Naive thymus-derived CD4-positive, alpha-beta T cell (primary cell): ENCODE measurements at regions of chr4 and their contacts with region 1.

Region 1: GRCh38 chr4:168514249-168514852 is 17.5 kb downstream of the PALLD start:
- DNase-seq: peak in 5 of 9 donors; percentile 16 to 36 (median 25)
- ATAC-seq: no peak
- H3K4me3 ChIP-seq: no peak overlapping the region
- H3K4me3 Mint-ChIP-seq: no peak overlapping the region
- H3K27ac ChIP-seq: no peak overlapping the region
- H3K27ac Mint-ChIP-seq: no peak overlapping the region
- H3K4me1 ChIP-seq: peaks cover 16 to 20% of the 10 kb centered on the region in 2 donors
- H3K4me1 Mint-ChIP-seq: peaks cover 5 to 38% (median 35%) of the 10 kb centered on the region in 7 donors
- H3K27me3 ChIP-seq: no peaks in the 10 kb centered on the region
- H3K27me3 Mint-ChIP-seq: peaks cover 0 to 31% (median 0%) of the 10 kb centered on the region in 5 donors

Region 2: DNA sequence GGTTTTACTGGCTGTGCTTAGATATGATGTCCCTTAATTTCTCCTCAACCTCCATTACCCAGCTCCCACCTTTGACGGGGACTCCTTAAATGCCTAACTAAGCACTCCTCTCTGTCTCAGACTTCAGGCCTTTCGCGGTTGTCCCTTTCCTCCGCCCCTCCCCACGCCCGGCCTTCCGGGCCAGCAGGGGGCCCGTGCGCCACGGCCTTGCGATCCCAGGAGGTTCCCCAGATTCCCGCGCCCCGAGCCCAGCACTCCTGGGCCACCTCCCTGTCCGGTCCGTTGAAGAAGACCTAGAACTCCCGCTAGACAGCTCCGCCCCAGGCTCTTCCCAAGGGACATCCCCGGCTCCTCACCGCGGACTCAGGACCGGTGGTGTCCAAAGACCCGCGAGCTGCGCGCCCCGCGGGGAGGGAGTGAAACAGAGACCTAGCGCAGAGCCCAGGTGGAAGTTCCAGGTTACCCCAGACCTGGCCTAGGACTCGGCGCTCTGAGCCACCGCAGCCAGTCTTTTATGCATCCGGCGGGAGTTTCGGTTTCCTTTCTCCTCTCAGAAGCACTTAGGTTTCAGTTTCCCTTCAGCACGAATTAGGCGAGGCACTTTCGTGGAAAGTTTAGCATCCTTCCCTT is 196.0 kb before region 1 on chr4 and contains the start of gene DDX60:
- CTCF ChIA-PET with region 1: interaction called, 3 read pairs
- POLR2A ChIA-PET with region 1: no interaction called
- intact Hi-C with region 1: loop called in 1 of 2 experiments (anchors 2 kb)
- DNase-seq: peak; percentile 54 to 89 (median 85)
- ATAC-seq: peak; percentile 95
- H3K4me3 ChIP-seq: peak within 1 kb of the TSS; percentile 88
- H3K4me3 Mint-ChIP-seq: peak within 1 kb of the TSS; percentile 84 to 99 (median 96)
- H3K27ac ChIP-seq: peak within 1 kb of the TSS; percentile 95
- H3K27ac Mint-ChIP-seq: peak within 1 kb of the TSS; percentile 96 to 99 (median 99)
- H3K4me1 ChIP-seq: peaks cover 12 to 18% of the 10 kb centered on the region in 2 donors
- H3K4me1 Mint-ChIP-seq: peaks cover 28 to 69% (median 59%) of the 10 kb centered on the region in 7 donors
- H3K27me3 ChIP-seq: no peaks in the 10 kb centered on the region
- H3K27me3 Mint-ChIP-seq: no peaks in the 10 kb centered on the region
- total RNA-seq, gene DDX60: 15.8 to 121 (median 29.0) TPM

Region 3: DNA sequence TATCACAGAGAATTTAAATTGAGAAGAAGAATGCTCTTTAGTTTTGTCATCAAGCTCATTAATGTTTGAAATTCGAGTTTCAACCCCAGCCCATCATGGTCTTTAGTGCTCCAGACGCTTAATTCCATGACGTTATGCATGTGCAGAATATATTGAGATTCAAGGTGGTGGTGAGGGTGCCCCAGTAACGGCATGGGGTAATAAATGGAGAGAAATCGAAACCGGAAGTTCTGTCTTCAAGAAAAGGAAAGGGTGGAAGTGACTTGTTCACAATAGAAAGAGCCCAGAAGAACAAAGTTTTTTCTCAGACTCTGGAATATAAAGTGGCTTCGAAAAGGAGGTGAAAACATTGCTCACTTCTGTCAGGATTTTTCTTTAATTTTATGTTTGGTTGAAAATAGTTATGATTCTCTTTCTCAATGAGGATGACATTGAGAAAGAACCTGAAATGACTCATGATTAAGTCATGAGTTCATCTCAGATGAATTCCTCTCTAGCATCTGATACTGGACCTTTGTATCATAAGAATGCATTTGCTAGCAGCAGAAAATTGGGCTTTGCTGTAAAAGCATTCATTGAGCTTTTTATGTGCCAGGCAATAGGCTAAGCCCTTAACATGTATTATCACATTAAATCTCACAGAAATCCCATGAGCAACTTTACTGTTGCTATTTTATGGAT is 33.3 kb before region 1 on chr4:
- CTCF ChIA-PET with region 1: interaction called, 9 read pairs
- POLR2A ChIA-PET with region 1: interaction called, 10 read pairs
- intact Hi-C with region 1: loop called (anchors 1 kb)
- DNase-seq: peak in 8 of 9 donors; percentile 22 to 85 (median 78)
- ATAC-seq: peak; percentile 75
- H3K4me3 ChIP-seq: peak overlapping the region; percentile 72
- H3K4me3 Mint-ChIP-seq: peak overlapping the region; percentile 88 to 100 (median 98)
- H3K27ac ChIP-seq: peak overlapping the region; percentile 95
- H3K27ac Mint-ChIP-seq: peak overlapping the region; percentile 98 to 100 (median 99)
- H3K4me1 ChIP-seq: peaks cover 20 to 33% of the 10 kb centered on the region in 2 donors
- H3K4me1 Mint-ChIP-seq: peaks cover 46 to 82% (median 74%) of the 10 kb centered on the region in 7 donors
- H3K27me3 ChIP-seq: no peaks in the 10 kb centered on the region
- H3K27me3 Mint-ChIP-seq: no peaks in the 10 kb centered on the region

Region 4: GRCh38 chr4:168551945-168552695 is 37.8 kb after region 1 on chr4:
- CTCF ChIA-PET with region 1: no interaction called
- POLR2A ChIA-PET with region 1: no interaction called
- intact Hi-C with region 1: loop called (anchors 1 to 5 kb)
- DNase-seq: peak in 6 of 9 donors; percentile 8 to 38 (median 23)
- ATAC-seq: peak; percentile 57
- H3K4me3 ChIP-seq: no peak overlapping the region
- H3K4me3 Mint-ChIP-seq: no peak overlapping the region
- H3K27ac ChIP-seq: no peak overlapping the region
- H3K27ac Mint-ChIP-seq: no peak overlapping the region
- H3K4me1 ChIP-seq: no peaks in the 10 kb centered on the region
- H3K4me1 Mint-ChIP-seq: no peaks in the 10 kb centered on the region
- H3K27me3 ChIP-seq: no peaks in the 10 kb centered on the region
- H3K27me3 Mint-ChIP-seq: peaks cover 0 to 9% (median 4%) of the 10 kb centered on the region in 5 donors

Region 5: DNA sequence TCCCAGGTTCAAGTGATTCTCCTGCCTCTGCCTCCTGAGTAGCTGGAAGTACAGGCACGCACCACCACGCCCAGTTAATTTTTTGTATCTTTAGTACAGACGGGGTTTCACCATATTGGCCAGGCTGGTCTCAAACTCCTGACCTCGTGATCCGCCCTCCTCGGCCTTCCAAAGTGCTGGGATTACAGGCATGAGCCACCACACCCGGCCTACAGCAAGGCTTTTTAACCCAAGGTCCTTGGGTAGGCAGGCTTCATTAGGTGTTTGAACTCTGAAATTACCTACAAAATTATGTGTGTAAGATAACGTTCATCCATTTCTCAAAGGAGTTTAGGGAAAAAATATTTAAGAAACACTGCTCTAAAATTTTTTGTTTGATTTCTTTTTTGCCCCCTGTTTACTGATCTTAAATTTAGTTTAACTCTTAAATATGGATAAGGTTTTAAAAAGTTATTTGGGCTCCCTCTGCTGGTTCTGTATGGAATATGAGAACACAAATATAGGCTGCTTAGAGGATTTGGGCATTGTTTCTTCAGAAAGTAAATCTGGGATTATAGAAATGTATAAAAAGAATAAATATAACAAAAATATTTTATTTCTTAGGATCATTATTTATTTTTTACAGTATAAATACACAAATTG is 402.9 kb after region 1 on chr4:
- CTCF ChIA-PET with region 1: no interaction called
- POLR2A ChIA-PET with region 1: no interaction called
- intact Hi-C with region 1: loop called in 1 of 2 experiments (anchors 1 kb)
- DNase-seq: peak in 2 of 9 donors; percentile 12
- ATAC-seq: no peak
- H3K4me3 ChIP-seq: no peak overlapping the region
- H3K4me3 Mint-ChIP-seq: no peak overlapping the region
- H3K27ac ChIP-seq: no peak overlapping the region
- H3K27ac Mint-ChIP-seq: no peak overlapping the region
- H3K4me1 ChIP-seq: no peaks in the 10 kb centered on the region
- H3K4me1 Mint-ChIP-seq: no peaks in the 10 kb centered on the region
- H3K27me3 ChIP-seq: no peaks in the 10 kb centered on the region
- H3K27me3 Mint-ChIP-seq: no peaks in the 10 kb centered on the region

Region 6: DNA sequence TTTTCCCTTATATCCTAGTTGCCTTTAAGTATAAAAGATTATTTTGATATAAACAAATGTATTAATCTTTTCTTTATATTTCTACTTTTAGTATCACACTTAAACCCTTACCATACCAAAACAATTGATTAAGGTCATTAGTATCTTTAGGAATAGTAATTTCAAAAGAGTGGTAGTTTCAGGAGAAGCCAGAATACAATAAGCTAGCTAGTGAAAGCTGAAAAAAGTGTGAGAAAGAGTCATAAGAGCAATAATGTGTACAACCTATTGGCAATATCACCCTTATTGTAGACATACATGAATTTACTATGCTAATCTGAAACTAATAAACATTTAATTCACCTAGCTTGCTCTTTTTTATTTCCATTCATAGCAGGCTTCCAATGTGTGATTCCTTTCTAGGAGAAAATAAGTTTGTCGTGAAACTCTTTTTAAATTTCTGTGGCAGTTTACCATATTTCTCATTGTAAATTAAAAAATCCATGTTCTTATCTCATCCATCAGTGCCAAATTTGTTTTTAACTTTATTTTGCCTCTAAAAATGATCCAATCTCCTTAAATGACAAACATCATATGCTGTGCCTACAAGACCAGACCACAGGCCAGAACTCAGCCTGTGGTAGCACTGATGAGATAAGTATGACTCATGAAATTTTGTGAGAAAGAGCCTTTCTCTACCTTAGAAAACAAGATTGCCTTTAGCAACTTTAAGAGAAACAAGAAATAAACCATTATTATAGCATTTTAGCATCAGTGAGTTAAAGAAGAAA is 1090.0 kb after region 1 on chr4:
- CTCF ChIA-PET with region 1: no interaction called
- POLR2A ChIA-PET with region 1: no interaction called
- intact Hi-C with region 1: no loop called
- DNase-seq: no peak
- ATAC-seq: no peak
- H3K4me3 ChIP-seq: no peak overlapping the region
- H3K4me3 Mint-ChIP-seq: peak overlapping the region in 1 of 10 donors; percentile 15
- H3K27ac ChIP-seq: no peak overlapping the region
- H3K27ac Mint-ChIP-seq: peak overlapping the region in 2 of 9 donors; percentile 32 to 40
- H3K4me1 ChIP-seq: no peaks in the 10 kb centered on the region
- H3K4me1 Mint-ChIP-seq: peaks cover 0 to 46% (median 34%) of the 10 kb centered on the region in 7 donors
- H3K27me3 ChIP-seq: no peaks in the 10 kb centered on the region
- H3K27me3 Mint-ChIP-seq: no peaks in the 10 kb centered on the region